ENCODE measurements at regions of chr1 and their contacts with region 1.

Region 1: GRCh38 chr1:27568300-27569087 is 35.5 kb downstream of the AHDC1 start:
- DNase-seq: peak; percentile 86 to 93
- ATAC-seq: peak; percentile 76 to 88
- H3K4me3 ChIP-seq: peak overlapping the region; percentile 44
- H3K27ac ChIP-seq: peak overlapping the region; percentile 85
- H3K4me1 ChIP-seq: peaks cover 94% of the 10 kb centered on the region
- CTCF ChIP-seq: peak; percentile 80
- EP300 ChIP-seq: no peak
- POLR2A ChIP-seq: peak; percentile 59
- RAD21 ChIP-seq: peak in 1 of 2 experiments; percentile 43; a peak in 1 of 5 replicates

Region 2: DNA sequence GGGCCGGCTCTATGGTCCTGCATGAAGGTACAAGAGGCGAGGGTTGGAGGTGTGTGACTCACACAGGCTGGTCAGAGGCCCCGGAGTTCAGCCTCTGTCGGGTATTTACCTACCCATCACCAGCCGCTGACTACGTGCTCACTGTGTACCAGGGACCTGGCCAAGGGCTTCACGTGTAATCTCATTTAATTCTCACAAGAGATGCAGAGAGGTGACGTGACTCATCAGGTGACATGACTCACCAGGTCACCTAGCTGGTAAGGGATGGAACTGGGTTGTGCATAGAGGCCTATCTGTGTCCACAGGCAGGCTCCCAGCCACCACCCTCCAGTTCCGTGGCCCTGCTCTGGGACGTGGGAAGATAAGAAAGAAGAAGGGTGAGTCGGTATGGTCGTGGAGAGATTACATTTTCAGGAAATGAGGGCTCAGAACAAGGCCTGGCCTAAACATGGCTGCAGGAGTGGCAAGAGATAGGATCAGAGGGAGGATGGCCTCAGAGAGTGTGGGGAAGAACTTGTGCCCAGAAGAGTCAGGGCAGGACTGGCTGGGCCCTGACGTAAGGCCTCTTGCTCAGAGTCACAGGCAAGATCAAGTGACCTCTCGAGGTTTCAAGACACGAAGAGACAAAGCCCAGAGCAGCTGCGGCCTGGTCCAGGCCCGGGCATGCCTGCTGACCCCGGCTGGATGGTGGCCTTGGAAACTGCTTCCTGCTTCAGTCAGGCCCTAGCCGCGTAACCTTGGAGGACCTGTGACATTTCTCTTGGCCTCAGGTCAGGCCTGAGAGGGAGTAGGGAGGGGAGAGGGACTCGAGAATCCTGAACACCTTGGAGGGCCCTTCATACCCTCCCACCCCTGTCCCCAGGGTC is 25.9 kb before region 1 on chr1:
- CTCF ChIA-PET with region 1: interaction called, 10 read pairs
- POLR2A ChIA-PET with region 1: no interaction called
- DNase-seq: peak; percentile 88 to 94
- ATAC-seq: peak; percentile 86 to 87
- H3K4me3 ChIP-seq: no peak overlapping the region; the same call in 2 of the 3 replicates
- H3K27ac ChIP-seq: peak overlapping the region; percentile 96 to 99
- H3K4me1 ChIP-seq: peaks cover 85% of the 10 kb centered on the region
- CTCF ChIP-seq: no peak
- EP300 ChIP-seq: no peak; a peak in 1 of 5 replicates
- POLR2A ChIP-seq: no peak
- RAD21 ChIP-seq: no peak; a peak in 2 of 5 replicates

Region 3: DNA sequence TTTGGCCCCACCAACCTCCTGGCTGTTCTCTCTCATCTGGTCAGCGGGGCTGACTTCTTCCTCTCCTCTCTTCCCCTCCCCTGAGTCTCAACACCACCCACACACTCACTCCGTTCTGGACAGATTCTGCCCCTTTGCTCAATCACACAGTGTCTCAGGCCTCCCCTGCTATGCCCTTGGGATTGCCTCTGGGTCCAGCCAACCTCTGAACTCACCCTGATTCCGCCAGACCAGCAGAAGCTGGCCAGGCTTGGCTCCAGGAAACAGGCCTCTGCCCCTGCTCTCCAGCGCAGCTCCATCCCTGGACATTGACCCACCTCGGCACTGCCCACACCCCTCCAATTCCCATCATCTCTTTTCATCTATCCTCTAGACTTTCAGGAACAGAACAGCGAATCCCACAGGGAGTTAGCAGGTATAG is 13.3 kb after region 1 on chr1:
- CTCF ChIA-PET with region 1: interaction called, 20 read pairs
- POLR2A ChIA-PET with region 1: no interaction called
- DNase-seq: no peak
- ATAC-seq: no peak
- H3K4me3 ChIP-seq: no peak overlapping the region
- H3K27ac ChIP-seq: no peak overlapping the region
- H3K4me1 ChIP-seq: peaks cover under 1% of the 10 kb centered on the region; the same call in 1 of the 3 replicates
- CTCF ChIP-seq: no peak
- EP300 ChIP-seq: no peak
- POLR2A ChIP-seq: no peak
- RAD21 ChIP-seq: no peak